ENCODE measurements at regions of chr7 and their contacts with region 1.

Region 1: GRCh38 chr7:105352018-105352612 is 36.6 kb downstream of the SRPK2 start:
- DNase-seq: peak; percentile 56 to 88
- ATAC-seq: peak; percentile 89 to 97 (median 97)
- H3K4me3 ChIP-seq: peak overlapping the region; percentile 14
- H3K4me3 Mint-ChIP-seq: peak overlapping the region; percentile 80
- H3K27ac ChIP-seq: peak overlapping the region; percentile 75
- H3K27ac Mint-ChIP-seq: peak overlapping the region; percentile 82 to 88
- H3K4me1 ChIP-seq: peaks cover 84% of the 10 kb centered on the region
- H3K4me1 Mint-ChIP-seq: peaks cover 54 to 69% of the 10 kb centered on the region in 2 donors
- H3K27me3 ChIP-seq: no peaks in the 10 kb centered on the region
- H3K27me3 Mint-ChIP-seq: no peaks in the 10 kb centered on the region
- CTCF ChIP-seq: no peak

Region 2: DNA sequence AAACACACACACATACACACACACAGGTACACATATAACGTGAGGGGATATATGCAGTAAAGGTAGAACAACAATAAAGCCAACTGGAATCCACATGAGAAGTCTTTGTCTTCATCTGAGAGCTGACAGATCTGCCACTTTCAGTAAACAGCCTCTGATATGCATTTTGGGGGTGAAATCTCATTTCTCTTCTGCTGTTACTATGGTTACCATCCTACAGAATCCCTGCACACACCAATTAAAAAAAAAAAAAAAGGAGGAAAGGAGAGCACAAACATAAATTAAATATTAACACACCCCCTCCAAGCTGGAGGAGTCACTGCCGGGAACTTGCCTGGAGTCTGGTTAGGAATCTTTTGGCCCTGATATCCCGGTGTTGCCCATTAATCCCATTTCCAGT is 854.7 kb before region 1 on chr7:
- intact Hi-C with region 1: no loop called
- DNase-seq: no peak
- ATAC-seq: no peak
- H3K4me3 ChIP-seq: no peak overlapping the region
- H3K4me3 Mint-ChIP-seq: no peak overlapping the region
- H3K27ac ChIP-seq: no peak overlapping the region
- H3K27ac Mint-ChIP-seq: no peak overlapping the region
- H3K4me1 ChIP-seq: no peaks in the 10 kb centered on the region
- H3K4me1 Mint-ChIP-seq: no peaks in the 10 kb centered on the region
- H3K27me3 ChIP-seq: no peaks in the 10 kb centered on the region
- H3K27me3 Mint-ChIP-seq: no peaks in the 10 kb centered on the region
- CTCF ChIP-seq: no peak

Region 3: GRCh38 chr7:105387621-105388372 is 35.7 kb after region 1 on chr7:
- intact Hi-C with region 1: loop called (anchors 2 kb)
- DNase-seq: peak; percentile 52 to 70
- ATAC-seq: peak; percentile 59 to 74 (median 73)
- H3K4me3 ChIP-seq: peak overlapping the region; percentile 74
- H3K4me3 Mint-ChIP-seq: peak overlapping the region; percentile 97
- H3K27ac ChIP-seq: peak overlapping the region; percentile 45
- H3K27ac Mint-ChIP-seq: peak overlapping the region; percentile 84 to 86
- H3K4me1 ChIP-seq: peaks cover 13% of the 10 kb centered on the region
- H3K4me1 Mint-ChIP-seq: peaks cover 37 to 40% of the 10 kb centered on the region in 2 donors
- H3K27me3 ChIP-seq: no peaks in the 10 kb centered on the region
- H3K27me3 Mint-ChIP-seq: no peaks in the 10 kb centered on the region
- CTCF ChIP-seq: no peak

Region 4: DNA sequence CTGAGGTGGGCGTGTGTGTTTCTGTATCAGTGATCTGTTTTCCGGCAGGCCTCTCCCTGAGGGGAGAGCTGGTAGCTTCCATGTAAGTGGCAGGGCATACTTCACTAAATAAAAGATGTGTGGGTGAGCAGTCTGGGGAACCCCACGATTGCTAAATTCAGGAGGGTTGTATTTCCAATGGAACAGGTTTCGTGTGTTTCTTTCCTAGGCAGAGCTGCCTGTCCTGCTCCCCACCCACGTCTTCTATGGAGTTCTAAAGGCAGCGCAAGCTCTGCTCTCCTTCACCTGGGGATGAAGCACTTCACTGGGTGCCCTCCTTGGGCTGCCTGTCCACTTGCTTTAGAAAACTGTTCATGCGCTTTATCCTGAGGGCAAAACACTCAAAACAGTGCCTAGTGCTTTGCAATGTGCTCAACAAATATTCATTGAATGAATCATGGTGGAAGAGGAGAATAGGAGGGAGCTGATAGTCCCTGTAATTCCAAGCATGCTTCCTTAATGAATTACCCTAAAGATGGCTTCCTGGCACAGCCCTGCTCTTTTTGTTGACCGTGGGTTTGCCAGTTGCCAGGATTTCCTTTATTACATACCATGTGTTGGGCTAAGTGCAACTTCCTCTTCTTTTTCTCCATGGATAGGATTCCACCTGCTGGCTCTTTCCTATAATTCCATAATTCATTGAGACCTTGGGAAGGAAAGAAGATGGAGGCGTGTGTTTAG is 87.2 kb after region 1 on chr7:
- intact Hi-C with region 1: no loop called
- DNase-seq: no peak
- ATAC-seq: no peak
- H3K4me3 ChIP-seq: no peak overlapping the region
- H3K4me3 Mint-ChIP-seq: no peak overlapping the region
- H3K27ac ChIP-seq: no peak overlapping the region
- H3K27ac Mint-ChIP-seq: no peak overlapping the region
- H3K4me1 ChIP-seq: no peaks in the 10 kb centered on the region
- H3K4me1 Mint-ChIP-seq: peaks cover 2% of the 10 kb centered on the region in 2 donors
- H3K27me3 ChIP-seq: no peaks in the 10 kb centered on the region
- H3K27me3 Mint-ChIP-seq: no peaks in the 10 kb centered on the region
- CTCF ChIP-seq: no peak

Region 5: GRCh38 chr7:105924945-105925344 is 572.8 kb after region 1 on chr7:
- intact Hi-C with region 1: no loop called
- DNase-seq: peak in 1 of 2 donors; percentile 63
- ATAC-seq: no peak
- H3K4me3 ChIP-seq: no peak overlapping the region
- H3K4me3 Mint-ChIP-seq: no peak overlapping the region
- H3K27ac ChIP-seq: no peak overlapping the region
- H3K27ac Mint-ChIP-seq: peak overlapping the region; percentile 37 to 59
- H3K4me1 ChIP-seq: peaks cover 9% of the 10 kb centered on the region
- H3K4me1 Mint-ChIP-seq: peaks cover 16 to 28% of the 10 kb centered on the region in 2 donors
- H3K27me3 ChIP-seq: no peaks in the 10 kb centered on the region
- H3K27me3 Mint-ChIP-seq: no peaks in the 10 kb centered on the region
- CTCF ChIP-seq: no peak